Activated T-helper 2 cell treated with anti-CD3 and anti-CD28 coated beads, Interferon-gamma antibody, Interleukin-2, Interleukin-4, amounts not matched to agents 10 μg/mL and 5 μg/mL and 100 μg/mL, durations not matched to agents 14 hours and 24 hours and 36 hours (primary cell): ENCODE measurements at regions of chr3 and their contacts with region 1.

Region 1: DNA sequence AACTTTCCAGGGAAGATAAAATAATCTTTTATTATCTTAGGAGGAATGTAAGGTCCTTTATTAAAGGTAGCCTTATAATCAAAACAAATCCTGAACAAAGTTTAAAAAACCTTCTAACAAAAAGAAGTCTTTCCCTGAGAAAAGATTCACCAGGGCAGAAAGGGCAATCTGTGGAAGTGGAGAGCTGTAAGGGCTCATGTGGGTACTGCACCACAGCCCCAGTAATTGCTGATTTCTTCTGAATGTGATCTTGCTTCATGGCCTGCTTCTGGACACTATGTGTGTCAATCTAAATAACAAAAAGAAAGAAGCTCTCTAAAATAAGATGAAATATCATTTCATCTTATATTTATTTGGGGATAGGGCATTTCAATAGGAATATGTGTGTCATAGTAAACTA is 1501.6 kb downstream of the OTOL1 start:
- DNase-seq: no peak
- H3K4me3 Mint-ChIP-seq: no peak overlapping the region
- H3K27ac Mint-ChIP-seq: no peak overlapping the region
- H3K4me1 Mint-ChIP-seq: no peaks in the 10 kb centered on the region
- H3K27me3 Mint-ChIP-seq: no peaks in the 10 kb centered on the region

Region 2: GRCh38 chr3:163011590-163011989 is 13.4 kb after region 1 on chr3:
- intact Hi-C with region 1: loop called (anchors 1 kb)
- DNase-seq: no peak
- H3K4me3 Mint-ChIP-seq: no peak overlapping the region
- H3K27ac Mint-ChIP-seq: no peak overlapping the region
- H3K4me1 Mint-ChIP-seq: no peaks in the 10 kb centered on the region
- H3K27me3 Mint-ChIP-seq: no peaks in the 10 kb centered on the region

Region 3: GRCh38 chr3:163043074-163043473 is 44.9 kb after region 1 on chr3:
- intact Hi-C with region 1: no loop called
- DNase-seq: no peak
- H3K4me3 Mint-ChIP-seq: no peak overlapping the region
- H3K27ac Mint-ChIP-seq: no peak overlapping the region
- H3K4me1 Mint-ChIP-seq: no peaks in the 10 kb centered on the region
- H3K27me3 Mint-ChIP-seq: no peaks in the 10 kb centered on the region